Left colon (tissue), 2 donors: ENCODE measurements at regions of chr11 and their contacts with region 1.

Region 1: DNA sequence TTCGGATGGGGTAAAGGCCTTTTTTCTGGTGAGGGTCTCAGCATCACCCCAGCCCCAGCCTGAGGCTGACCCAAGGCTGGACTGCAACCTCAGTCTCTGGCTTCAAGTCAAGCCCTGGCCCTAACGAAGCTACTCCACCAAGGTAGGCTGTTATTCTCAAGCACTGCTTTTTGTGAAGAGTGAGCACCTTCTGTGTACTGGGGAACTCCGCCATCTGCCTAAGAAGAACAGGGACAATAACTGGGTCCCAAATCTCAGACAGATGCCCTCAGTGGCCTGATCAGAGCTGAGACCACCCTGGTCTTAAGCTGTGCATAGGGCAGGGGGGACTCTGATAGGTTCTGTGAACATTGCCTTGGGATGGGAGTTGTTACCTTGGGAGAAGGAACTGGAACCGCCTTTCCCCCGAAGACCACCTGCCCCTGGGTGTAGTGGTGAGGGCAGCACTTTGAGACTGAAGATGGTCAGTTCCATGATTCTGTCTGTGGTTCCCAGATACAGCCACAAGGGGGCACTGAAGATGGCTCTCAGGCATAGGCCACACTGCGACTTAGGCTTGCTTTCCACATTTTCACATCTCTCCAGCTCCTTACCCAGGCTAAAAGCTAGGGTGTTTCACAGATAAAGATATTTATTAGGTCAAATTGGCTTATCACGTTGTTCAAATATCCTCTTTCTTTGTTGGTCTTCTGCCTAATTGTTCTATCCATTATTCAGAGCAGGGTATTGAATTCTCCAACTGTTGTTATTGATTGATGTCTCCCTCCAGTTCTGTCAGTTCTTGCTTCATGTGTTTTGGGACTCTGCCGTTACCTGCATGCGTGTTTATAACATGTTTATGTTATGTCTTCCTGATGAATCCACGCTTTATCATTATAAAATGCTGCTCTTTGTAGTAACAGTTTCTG is 11.8 kb upstream of the UVRAG start:
- DNase-seq: peak; percentile 46 to 81
- ATAC-seq: peak; percentile 92

Region 2: DNA sequence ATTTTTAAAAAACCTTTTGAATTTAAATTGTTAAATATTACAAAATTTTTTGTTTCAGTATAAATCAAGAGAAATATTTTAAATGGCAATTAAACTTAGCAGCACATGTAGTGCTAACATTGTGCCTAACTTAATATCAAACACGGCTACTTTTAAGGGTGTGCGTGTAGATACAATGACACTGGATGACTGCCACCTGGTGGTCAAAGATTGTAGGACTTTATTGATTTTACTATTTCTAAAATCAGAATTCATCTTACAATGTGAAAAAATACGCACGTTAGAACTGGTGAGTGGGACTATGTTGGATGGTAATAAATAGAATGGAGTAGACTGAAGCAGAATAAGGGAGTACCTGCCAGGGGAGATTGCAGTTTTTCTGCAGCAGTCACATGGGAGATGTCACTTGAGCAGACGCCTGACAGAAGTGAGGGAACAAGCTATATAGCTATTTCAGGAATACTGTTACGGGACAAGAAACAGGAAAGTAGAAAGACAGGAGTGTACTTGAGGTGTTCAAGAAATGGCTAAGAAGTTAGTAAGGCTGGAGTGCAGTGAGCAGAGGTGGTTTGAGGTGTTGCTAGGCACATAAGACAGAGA is 64.7 kb after region 1 on chr11:
- intact Hi-C with region 1: loop called (anchors 2 to 5 kb)
- DNase-seq: peak in 1 of 2 donors; percentile 48
- ATAC-seq: peak; percentile 70

Region 3: DNA sequence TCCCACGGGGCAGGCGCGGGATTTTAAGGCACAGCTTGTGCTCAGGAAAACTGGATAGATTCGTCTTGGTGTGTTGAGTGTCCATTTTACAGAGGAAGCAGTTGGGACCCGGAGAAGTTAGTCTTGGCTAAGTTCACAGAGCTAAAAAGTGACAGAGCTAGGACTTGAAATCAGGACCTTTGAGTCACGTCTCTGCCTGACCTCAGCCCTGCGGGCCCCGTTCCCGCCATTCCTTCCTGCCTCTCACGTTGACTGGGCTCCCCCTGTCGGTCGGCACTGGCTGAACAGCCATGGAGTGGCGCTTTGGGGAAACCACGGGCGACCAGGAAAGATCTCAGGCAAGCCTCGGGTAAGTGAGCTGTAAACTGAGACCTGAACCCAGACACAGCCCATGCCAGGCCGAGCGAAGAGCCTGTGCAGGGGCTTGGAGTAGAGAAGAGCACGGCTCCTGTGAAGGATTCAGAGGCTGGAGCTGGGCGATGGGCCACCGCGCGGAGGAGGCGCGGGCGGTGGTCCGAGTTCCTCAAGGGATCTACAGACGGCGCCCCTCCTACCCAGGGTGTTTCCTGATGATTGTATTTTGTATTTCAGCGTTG is 349.0 kb after region 1 on chr11:
- intact Hi-C with region 1: loop called in 1 of 2 experiments (anchors 10 kb)
- DNase-seq: peak; percentile 79 to 89
- ATAC-seq: peak; percentile 20